Activated CD4-positive, alpha-beta T cell treated with anti-CD3 and anti-CD28 coated beads, Interleukin-2, amount 10 ng/mL, durations not matched to agents 24 days and 14 days (primary cell): ENCODE measurements at regions of chr17 and their contacts with region 1.

Region 1: GRCh38 chr17:38498186-38498752 is 70.0 kb downstream of the ARHGAP23 start:
- DNase-seq: no peak
- H3K4me3 Mint-ChIP-seq: no peak overlapping the region
- H3K27ac Mint-ChIP-seq: no peak overlapping the region
- H3K4me1 Mint-ChIP-seq: no peaks in the 10 kb centered on the region
- H3K27me3 Mint-ChIP-seq: no peaks in the 10 kb centered on the region

Region 2: DNA sequence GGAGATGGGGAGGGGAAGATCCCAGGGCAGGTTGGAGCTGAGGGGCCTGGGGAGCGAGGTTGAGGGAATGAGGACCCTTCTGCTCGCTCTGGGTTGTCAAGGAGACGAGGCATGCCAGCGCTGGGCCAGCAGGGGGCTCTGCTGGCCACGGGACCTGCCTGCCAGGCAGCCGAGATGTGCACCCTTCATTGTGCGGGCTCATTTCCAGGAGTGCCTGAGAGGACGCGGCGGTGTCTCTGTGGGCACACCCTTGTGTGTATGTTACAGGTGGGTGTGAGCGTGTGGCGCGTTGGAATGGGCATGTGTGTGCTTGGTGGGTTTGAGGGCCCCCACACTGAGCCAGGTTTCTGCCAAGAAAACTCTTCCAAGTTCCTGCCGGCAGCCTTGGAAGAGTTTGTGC is 54.1 kb before region 1 on chr17:
- intact Hi-C with region 1: loop called (anchors 2 kb)
- DNase-seq: peak; percentile 83
- H3K4me3 Mint-ChIP-seq: no peak overlapping the region
- H3K27ac Mint-ChIP-seq: no peak overlapping the region
- H3K4me1 Mint-ChIP-seq: peaks cover 6% of the 10 kb centered on the region
- H3K27me3 Mint-ChIP-seq: peaks cover 6% of the 10 kb centered on the region